ENCODE measurements at regions of chr17 and their contacts with region 1.

Region 1: GRCh38 chr17:80981062-80981902 is 10.4 kb upstream of the CHMP6 start:
- DNase-seq: peak; percentile 99
- H3K4me3 ChIP-seq: peak overlapping the region; percentile 25 to 44
- H3K27ac ChIP-seq: no peak overlapping the region
- H3K4me1 ChIP-seq: no peaks in the 10 kb centered on the region; a peak in 1 of 4 replicates
- H3K27me3 ChIP-seq: no peaks in the 10 kb centered on the region
- CTCF ChIP-seq: peak; percentile 96
- EP300 ChIP-seq: no peak
- RAD21 ChIP-seq: peak; percentile 86

Region 2: DNA sequence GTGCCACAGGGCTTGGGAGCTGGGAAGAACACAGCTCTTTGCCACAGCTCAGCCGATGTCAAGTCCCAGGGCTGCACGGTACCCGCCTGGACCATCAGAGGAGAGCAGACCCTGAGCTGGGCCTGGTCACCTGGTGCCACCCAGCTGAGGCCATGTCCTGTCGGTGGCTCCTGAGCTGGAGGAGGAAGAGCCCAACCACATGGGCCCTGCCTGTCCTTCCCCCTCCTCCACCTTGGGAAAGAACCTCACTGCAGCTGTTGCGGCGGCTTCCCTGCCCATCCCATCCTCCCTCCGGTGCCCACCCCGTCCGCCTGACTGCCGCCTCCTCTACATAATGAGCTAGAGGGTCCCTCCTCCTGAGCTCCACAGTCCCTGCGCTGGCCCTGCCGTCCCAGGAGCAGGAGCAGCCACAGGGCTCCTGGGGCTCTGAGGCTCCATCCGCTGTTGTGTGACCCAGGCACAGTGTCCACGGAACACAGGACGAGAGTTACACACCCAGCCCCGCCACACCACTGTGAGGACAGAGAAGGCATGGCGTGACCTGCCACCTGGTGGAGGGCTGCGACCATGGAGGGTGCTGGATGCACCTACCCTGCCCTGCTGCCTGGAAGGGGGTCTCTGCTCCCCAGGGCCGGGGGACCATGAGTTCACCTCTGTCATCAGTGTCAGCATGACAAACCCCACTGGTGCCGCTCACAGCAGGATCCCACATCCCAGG is 11.1 kb before region 1 on chr17:
- CTCF ChIA-PET with region 1: interaction called, 47 read pairs
- POLR2A ChIA-PET with region 1: no interaction called
- DNase-seq: peak; percentile 82
- H3K4me3 ChIP-seq: no peak overlapping the region
- H3K27ac ChIP-seq: no peak overlapping the region
- H3K4me1 ChIP-seq: peaks cover 9 to 33% of the 10 kb centered on the region in 2 experiments; a peak in 2 of 4 replicates
- H3K27me3 ChIP-seq: peaks cover 3% of the 10 kb centered on the region; the same call in 1 of the 2 replicates
- CTCF ChIP-seq: peak; percentile 58
- EP300 ChIP-seq: no peak
- RAD21 ChIP-seq: peak; percentile 64

Region 3: DNA sequence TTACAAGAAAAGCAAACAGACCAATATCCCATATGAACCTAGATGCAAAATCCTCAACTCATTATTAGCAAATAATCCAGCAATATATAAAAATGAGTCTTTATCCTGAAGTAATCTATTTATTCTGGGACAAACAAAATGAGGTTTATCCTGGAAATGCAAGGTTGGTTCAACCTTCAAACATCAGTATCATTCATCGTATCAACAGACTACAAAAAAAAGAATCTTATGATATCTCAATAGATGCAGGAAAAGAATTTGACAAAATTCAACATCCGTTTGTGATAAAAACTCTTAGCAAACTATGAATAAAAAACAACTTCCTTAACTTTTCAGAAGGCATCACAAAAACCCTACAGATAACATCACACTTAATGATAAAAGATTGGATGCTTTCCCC is 35.3 kb after region 1 on chr17:
- CTCF ChIA-PET with region 1: no interaction called
- POLR2A ChIA-PET with region 1: no interaction called
- DNase-seq: no peak
- H3K4me3 ChIP-seq: no peak overlapping the region
- H3K27ac ChIP-seq: no peak overlapping the region
- H3K4me1 ChIP-seq: peaks cover 0 to 9% of the 10 kb centered on the region in 2 experiments; a peak in 1 of 4 replicates
- H3K27me3 ChIP-seq: peaks cover 10% of the 10 kb centered on the region
- CTCF ChIP-seq: no peak
- EP300 ChIP-seq: no peak
- RAD21 ChIP-seq: no peak

Region 4: GRCh38 chr17:81125573-81126081 is 144.3 kb after region 1 on chr17:
- CTCF ChIA-PET with region 1: no interaction called
- POLR2A ChIA-PET with region 1: no interaction called
- DNase-seq: no peak
- H3K4me3 ChIP-seq: no peak overlapping the region
- H3K27ac ChIP-seq: no peak overlapping the region
- H3K4me1 ChIP-seq: no peaks in the 10 kb centered on the region; a peak in 1 of 4 replicates
- H3K27me3 ChIP-seq: peaks cover 6% of the 10 kb centered on the region; the same call in 1 of the 2 replicates
- CTCF ChIP-seq: no peak
- EP300 ChIP-seq: no peak
- RAD21 ChIP-seq: no peak

Measured in SK-N-SH (cell line).